ENCODE measurements at regions of chr19 and their contacts with region 1.

Region 1: DNA sequence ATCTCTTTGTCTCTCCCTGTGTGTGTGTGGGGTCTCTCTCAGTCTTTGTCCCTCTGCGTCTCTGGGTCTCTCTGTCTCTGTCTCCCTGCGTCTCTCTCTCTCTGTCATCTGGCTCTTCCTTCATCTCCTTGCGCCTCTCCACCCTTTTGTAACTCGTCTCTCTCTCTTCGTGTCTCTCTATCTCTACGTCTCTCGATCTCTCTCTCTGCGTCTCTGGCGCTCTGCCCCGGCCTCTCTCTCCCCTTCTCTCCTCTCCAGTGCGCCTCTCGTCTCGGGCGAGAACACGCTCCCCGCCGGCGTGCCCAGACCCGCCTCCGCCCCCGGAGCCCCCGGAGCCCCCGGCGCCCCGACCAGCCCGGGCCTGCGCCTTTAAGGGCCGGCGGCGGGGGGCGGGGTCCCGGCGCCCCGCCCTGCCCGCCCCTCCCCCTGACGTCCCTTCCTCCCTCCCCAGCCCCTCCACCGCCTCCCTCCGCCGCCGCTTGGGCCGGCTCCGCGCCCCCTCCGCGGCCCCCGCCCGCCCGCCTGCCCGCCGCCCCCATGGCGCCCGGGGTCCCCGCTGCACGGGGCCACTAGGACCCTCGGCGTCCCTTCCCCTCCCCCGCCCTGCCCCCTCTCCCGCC is at the start of gene MARK4:
- DNase-seq: peak; percentile 40 to 44
- H3K4me3 ChIP-seq: peak within 1 kb of the TSS; percentile 50 to 69 (median 63)
- H3K27ac ChIP-seq: peak within 1 kb of the TSS in 2 of 3 donors; percentile 57 to 76
- H3K4me1 ChIP-seq: peaks cover 21 to 29% of the 10 kb centered on the region in 2 donors
- H3K27me3 ChIP-seq: no peaks in the 10 kb centered on the region
- CTCF ChIP-seq: no peak
- POLR2A ChIP-seq: no peak
- total RNA-seq, gene MARK4: 18.5 to 25.1 (median 22.1) TPM

Region 2: DNA sequence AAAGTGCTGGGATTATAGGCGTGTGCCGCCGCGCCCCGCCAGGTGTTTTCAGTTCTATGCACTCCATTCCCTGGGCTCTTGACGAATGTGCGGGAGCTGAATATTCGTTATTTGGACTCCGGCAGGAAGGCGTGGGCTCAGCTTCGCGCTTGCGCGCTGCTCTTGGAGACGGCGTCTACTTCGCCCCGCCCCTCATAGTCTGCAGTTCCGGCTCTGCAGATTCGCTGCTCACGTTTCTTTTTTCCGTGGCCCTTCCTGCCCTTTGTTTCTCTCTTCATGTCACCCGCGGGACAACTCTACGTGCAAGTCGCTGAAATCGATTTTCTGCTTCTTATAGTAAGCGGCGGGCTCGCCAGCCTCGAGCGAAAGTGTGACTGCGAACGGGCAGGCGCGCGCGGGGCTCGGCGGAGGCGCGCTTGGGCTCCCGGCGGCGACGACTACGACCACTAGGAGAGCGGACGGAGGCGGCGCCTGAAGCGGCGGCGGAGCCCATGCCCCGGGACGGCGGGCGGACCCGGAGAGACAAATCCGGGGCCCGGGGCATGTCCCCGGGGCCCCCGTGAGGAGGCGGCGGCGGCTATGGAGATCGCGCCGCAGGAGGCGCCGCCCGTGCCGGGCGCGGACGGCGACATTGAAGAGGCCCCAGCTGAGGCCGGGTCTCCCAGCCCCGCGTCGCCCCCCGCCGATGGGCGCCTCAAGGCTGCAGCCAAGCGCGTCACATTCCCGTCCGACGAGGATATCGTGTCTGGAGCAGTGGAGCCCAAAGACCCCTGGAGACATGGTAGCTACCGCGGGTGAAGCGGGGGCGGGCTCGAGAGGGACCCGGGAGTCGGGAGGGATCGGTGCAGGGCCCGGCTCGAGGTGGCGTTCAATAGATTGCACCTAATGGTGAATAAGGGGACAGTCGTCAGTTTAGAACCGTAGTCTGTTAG is 157.9 kb before region 1 on chr19 and contains the start of gene PPP1R37:
- intact Hi-C with region 1: no loop called
- DNase-seq: peak; percentile 95 to 96
- H3K4me3 ChIP-seq: peak within 1 kb of the TSS; percentile 60 to 99 (median 72)
- H3K27ac ChIP-seq: peak within 1 kb of the TSS; percentile 86 to 93 (median 90)
- H3K4me1 ChIP-seq: peaks cover 26 to 51% of the 10 kb centered on the region in 2 donors
- H3K27me3 ChIP-seq: no peaks in the 10 kb centered on the region
- CTCF ChIP-seq: peak in 4 of 6 experiments; percentile 10 to 45 (median 37)
- POLR2A ChIP-seq: peak in 1 of 2 donors; percentile 32
- total RNA-seq, gene PPP1R37: 34.9 to 59.7 (median 42.9) TPM

Region 3: GRCh38 chr19:45275370-45275971 is 24.5 kb after region 1 on chr19:
- intact Hi-C with region 1: no loop called
- DNase-seq: no peak
- H3K4me3 ChIP-seq: no peak overlapping the region
- H3K27ac ChIP-seq: no peak overlapping the region
- H3K4me1 ChIP-seq: no peaks in the 10 kb centered on the region
- H3K27me3 ChIP-seq: no peaks in the 10 kb centered on the region
- CTCF ChIP-seq: no peak
- POLR2A ChIP-seq: no peak

Region 4: GRCh38 chr19:45340232-45340898 is 89.4 kb after region 1 on chr19 and contains the start of gene KLC3:
- intact Hi-C with region 1: loop called (anchors 5 kb)
- DNase-seq: peak; percentile 44
- H3K4me3 ChIP-seq: peak within 1 kb of the TSS in 1 of 3 donors; percentile 40
- H3K27ac ChIP-seq: no peak within 1 kb of the TSS
- H3K4me1 ChIP-seq: peaks cover 0 to 6% of the 10 kb centered on the region in 2 donors
- H3K27me3 ChIP-seq: no peaks in the 10 kb centered on the region
- CTCF ChIP-seq: no peak
- POLR2A ChIP-seq: no peak
- total RNA-seq, gene KLC3: 0.45 to 1.2 (median 0.83) TPM

Region 5: DNA sequence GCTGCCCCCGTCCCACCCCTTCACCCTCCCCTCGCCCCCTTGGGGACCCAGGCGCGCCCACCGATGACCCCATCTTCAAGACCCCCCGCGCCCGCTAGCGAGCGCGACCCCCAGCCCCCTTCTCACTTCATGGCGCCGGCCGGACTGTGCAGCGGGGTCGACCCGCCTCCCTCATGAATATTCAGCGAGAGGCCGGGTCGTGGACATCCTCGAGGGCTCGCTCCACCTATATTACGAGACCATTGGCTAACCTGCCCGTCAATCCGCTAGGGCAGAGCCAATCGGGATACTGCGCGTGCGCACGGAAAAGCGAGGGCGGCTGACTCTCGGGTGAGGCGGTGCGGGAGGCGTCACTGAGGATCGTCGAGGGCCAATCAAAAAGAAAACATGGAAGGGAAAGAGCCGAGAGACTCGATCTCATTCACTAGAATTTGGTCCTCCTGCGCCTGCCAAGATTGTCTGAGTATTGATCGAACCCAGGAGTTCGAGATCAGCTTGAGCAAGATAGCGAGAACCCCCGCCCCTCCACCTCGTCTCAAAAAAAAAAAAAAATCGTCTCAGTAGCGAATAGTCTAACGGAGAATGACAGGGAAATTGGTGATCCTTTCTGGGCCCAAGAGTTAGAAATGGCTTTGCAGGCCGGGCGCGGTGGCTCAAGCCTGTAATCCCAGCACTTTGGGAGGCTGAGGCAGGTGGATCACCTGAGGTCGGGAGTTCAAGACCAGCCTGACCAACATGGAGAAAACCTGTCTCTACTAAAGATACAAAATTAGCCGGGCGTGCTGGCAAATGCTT is 119.7 kb after region 1 on chr19 and contains the start of gene ERCC2:
- intact Hi-C with region 1: no loop called
- DNase-seq: peak; percentile 98 to 99
- H3K4me3 ChIP-seq: peak within 1 kb of the TSS; percentile 4 to 70 (median 29)
- H3K27ac ChIP-seq: peak within 1 kb of the TSS; percentile 48 to 67 (median 54)
- H3K4me1 ChIP-seq: peaks cover 0 to 6% of the 10 kb centered on the region in 2 donors
- H3K27me3 ChIP-seq: no peaks in the 10 kb centered on the region
- CTCF ChIP-seq: no peak
- POLR2A ChIP-seq: no peak
- total RNA-seq, gene ERCC2: 9.4 to 19.2 (median 15.9) TPM

Region 6: GRCh38 chr19:45391340-45391739 is 140.4 kb after region 1 on chr19:
- intact Hi-C with region 1: no loop called
- DNase-seq: no peak
- H3K4me3 ChIP-seq: no peak overlapping the region
- H3K27ac ChIP-seq: no peak overlapping the region
- H3K4me1 ChIP-seq: no peaks in the 10 kb centered on the region
- H3K27me3 ChIP-seq: no peaks in the 10 kb centered on the region
- CTCF ChIP-seq: no peak
- POLR2A ChIP-seq: no peak

Region 7: GRCh38 chr19:45405435-45406225 is 154.7 kb after region 1 on chr19:
- intact Hi-C with region 1: loop called (anchors 10 kb)
- DNase-seq: peak; percentile 90
- H3K4me3 ChIP-seq: peak overlapping the region; percentile 19 to 92 (median 84)
- H3K27ac ChIP-seq: peak overlapping the region; percentile 74 to 97 (median 96)
- H3K4me1 ChIP-seq: peaks cover 21 to 31% of the 10 kb centered on the region in 2 donors
- H3K27me3 ChIP-seq: no peaks in the 10 kb centered on the region
- CTCF ChIP-seq: no peak
- POLR2A ChIP-seq: peak in 1 of 2 donors; percentile 25